CD4-positive, alpha-beta memory T cell (primary cell): ENCODE measurements at regions of chr15 and their contacts with region 1.

Region 1: DNA sequence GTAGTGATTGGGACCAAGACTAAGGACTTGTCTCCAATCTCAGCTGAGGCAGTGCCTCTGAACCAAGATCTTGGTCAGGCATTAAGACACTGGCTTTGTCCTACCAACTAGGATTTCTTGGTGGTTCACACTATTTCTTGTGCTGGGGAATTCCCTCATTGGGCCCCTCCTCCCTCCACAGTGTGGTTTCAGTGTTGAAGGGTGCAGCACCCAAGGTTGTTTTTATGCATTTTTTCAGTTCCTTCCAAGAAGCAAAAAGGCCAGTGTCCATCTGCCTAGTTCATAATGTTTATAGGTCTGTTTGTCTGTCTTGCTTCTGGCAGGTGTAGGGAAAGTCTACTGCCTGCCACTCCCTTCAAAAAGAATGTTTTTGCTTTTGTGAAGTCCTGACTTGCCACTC is 10.6 kb upstream of the ITPKA start:
- DNase-seq: peak; percentile 31 to 70 (median 41)
- H3K4me3 ChIP-seq: peak overlapping the region in 1 of 2 donors; percentile 7
- H3K4me3 Mint-ChIP-seq: peak overlapping the region; percentile 60 to 86 (median 76)
- H3K27ac ChIP-seq: peak overlapping the region; percentile 46
- H3K27ac Mint-ChIP-seq: peak overlapping the region; percentile 76 to 93 (median 84)
- H3K4me1 ChIP-seq: peaks cover 20% of the 10 kb centered on the region
- H3K4me1 Mint-ChIP-seq: peaks cover 11 to 26% (median 20%) of the 10 kb centered on the region in 4 donors
- H3K27me3 ChIP-seq: no peaks in the 10 kb centered on the region
- H3K27me3 Mint-ChIP-seq: no peaks in the 10 kb centered on the region

Region 2: GRCh38 chr15:41269887-41270286 is 213.2 kb before region 1 on chr15:
- CTCF ChIA-PET with region 1: no interaction called
- POLR2A ChIA-PET with region 1: no interaction called
- intact Hi-C with region 1: no loop called
- DNase-seq: no peak
- H3K4me3 ChIP-seq: no peak overlapping the region
- H3K4me3 Mint-ChIP-seq: no peak overlapping the region
- H3K27ac ChIP-seq: no peak overlapping the region
- H3K27ac Mint-ChIP-seq: no peak overlapping the region
- H3K4me1 ChIP-seq: no peaks in the 10 kb centered on the region
- H3K4me1 Mint-ChIP-seq: peaks cover 0 to 4% (median 0%) of the 10 kb centered on the region in 4 donors
- H3K27me3 ChIP-seq: no peaks in the 10 kb centered on the region
- H3K27me3 Mint-ChIP-seq: no peaks in the 10 kb centered on the region

Region 3: GRCh38 chr15:41493205-41493901 is 10.2 kb after region 1 on chr15 and contains the start of gene ITPKA:
- CTCF ChIA-PET with region 1: no interaction called
- POLR2A ChIA-PET with region 1: interaction called, 10 read pairs
- intact Hi-C with region 1: no loop called
- DNase-seq: peak; percentile 62 to 87 (median 66)
- H3K4me3 ChIP-seq: peak within 1 kb of the TSS; percentile 27 to 55
- H3K4me3 Mint-ChIP-seq: peak within 1 kb of the TSS; percentile 79 to 91 (median 87)
- H3K27ac ChIP-seq: peak within 1 kb of the TSS; percentile 48
- H3K27ac Mint-ChIP-seq: peak within 1 kb of the TSS in 6 of 7 donors; percentile 42 to 79 (median 57)
- H3K4me1 ChIP-seq: peaks cover 39% of the 10 kb centered on the region
- H3K4me1 Mint-ChIP-seq: peaks cover 11 to 23% (median 15%) of the 10 kb centered on the region in 4 donors
- H3K27me3 ChIP-seq: peaks cover 19% of the 10 kb centered on the region
- H3K27me3 Mint-ChIP-seq: peaks cover 9 to 13% of the 10 kb centered on the region in 2 donors
- total RNA-seq, gene ITPKA: 0.36 TPM in 1 of 2 experiments, not detected in the other

Region 4: GRCh38 chr15:41597787-41598186 is 114.7 kb after region 1 on chr15:
- CTCF ChIA-PET with region 1: no interaction called
- POLR2A ChIA-PET with region 1: no interaction called
- intact Hi-C with region 1: no loop called
- DNase-seq: no peak
- H3K4me3 ChIP-seq: no peak overlapping the region
- H3K4me3 Mint-ChIP-seq: no peak overlapping the region
- H3K27ac ChIP-seq: no peak overlapping the region
- H3K27ac Mint-ChIP-seq: no peak overlapping the region
- H3K4me1 ChIP-seq: no peaks in the 10 kb centered on the region
- H3K4me1 Mint-ChIP-seq: no peaks in the 10 kb centered on the region
- H3K27me3 ChIP-seq: no peaks in the 10 kb centered on the region
- H3K27me3 Mint-ChIP-seq: peaks cover 6 to 9% of the 10 kb centered on the region in 2 donors

Region 5: DNA sequence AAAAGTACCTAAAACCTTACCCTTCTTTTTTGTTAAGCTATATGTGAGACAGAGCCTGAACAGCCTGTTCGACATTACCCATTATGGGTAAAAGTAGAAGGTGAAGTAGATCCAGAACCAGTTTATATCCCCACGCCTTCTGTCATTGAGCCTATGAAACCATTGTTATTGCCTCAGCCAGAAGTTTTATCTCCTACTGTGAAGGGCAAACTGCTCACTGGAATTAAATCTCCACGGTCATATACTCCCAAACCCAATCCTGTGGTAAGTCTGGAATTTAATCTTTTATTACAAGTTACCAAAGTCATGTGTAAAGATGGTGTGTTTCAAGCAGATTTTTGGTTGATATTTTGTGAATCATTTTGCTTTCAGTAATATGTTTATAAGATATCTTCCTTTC is 244.0 kb after region 1 on chr15:
- CTCF ChIA-PET with region 1: no interaction called
- POLR2A ChIA-PET with region 1: no interaction called
- intact Hi-C with region 1: no loop called
- DNase-seq: no peak
- H3K4me3 ChIP-seq: no peak overlapping the region
- H3K4me3 Mint-ChIP-seq: no peak overlapping the region
- H3K27ac ChIP-seq: no peak overlapping the region
- H3K27ac Mint-ChIP-seq: no peak overlapping the region
- H3K4me1 ChIP-seq: no peaks in the 10 kb centered on the region
- H3K4me1 Mint-ChIP-seq: peaks cover 0 to 8% (median 1%) of the 10 kb centered on the region in 4 donors
- H3K27me3 ChIP-seq: no peaks in the 10 kb centered on the region
- H3K27me3 Mint-ChIP-seq: no peaks in the 10 kb centered on the region